Heart left ventricle (tissue), 16 donors: ENCODE measurements at regions of chrX and their contacts with region 1.

Region 1: GRCh38 chrX:101051549-101052302 is at the start of gene TRMT2B:
- DNase-seq: peak; percentile 69 to 84 (median 82)
- ATAC-seq: peak; percentile 95 to 99 (median 98)
- H3K4me3 ChIP-seq: peak within 1 kb of the TSS; percentile 12 to 92 (median 66)
- H3K27ac ChIP-seq: peak within 1 kb of the TSS; percentile 65 to 91 (median 85)
- H3K4me1 ChIP-seq: peaks cover 0 to 4% (median 0%) of the 10 kb centered on the region in 12 donors
- H3K27me3 ChIP-seq: no peaks in the 10 kb centered on the region
- CTCF ChIP-seq: no peak
- POLR2A ChIP-seq: peak in 1 of 2 donors; percentile 12
- total RNA-seq, gene TRMT2B: 13.5 to 21.6 (median 18.3) TPM

Region 2: DNA sequence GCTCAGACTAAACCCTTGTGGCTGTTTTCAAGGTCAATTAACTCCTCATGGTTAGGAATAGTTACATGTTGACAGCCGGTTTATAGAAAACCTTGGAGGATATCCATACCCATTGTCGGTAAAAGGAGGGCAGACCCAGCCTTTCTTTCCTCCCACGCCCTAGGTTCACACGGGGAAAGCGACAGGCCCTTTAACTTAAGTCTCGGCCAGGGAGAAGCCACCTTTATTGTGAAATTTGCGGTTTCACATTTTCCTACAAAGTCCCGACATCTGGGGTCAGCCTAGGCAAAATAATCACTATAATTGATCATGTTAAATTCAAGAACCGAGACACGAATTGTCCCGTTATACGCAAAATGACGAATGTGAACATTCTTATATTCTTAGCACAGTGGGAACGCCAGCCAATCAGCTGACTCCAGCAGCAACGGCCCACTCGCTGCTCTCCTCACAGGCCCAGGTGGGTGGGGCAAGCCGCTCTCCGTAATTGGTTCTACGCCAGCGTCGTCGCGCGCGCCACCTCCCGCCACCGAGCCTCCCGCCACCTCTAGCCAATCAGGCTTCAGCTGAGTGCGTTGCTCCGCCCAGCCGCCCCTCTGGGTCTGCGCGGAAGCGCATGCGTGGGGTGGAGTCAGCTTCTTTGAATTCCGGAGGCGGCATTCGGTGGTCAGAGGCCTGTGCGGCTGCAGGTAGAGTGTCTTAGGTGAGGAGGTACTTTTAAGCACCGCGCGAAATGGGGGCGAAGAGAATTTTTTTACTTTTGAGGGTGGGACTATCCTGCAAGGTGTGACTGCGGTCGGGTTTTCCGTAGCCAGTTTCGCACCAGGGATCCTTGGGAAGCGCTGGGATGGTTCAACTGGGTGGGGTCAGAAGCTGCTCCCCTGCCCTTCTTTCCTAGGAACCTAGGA is 46.1 kb after region 1 on chrX and contains the start of gene CENPI:
- intact Hi-C with region 1: loop called in 3 of 10 experiments (anchors 1 to 10 kb)
- DNase-seq: peak; percentile 92 to 96 (median 93)
- ATAC-seq: peak; percentile 100
- H3K4me3 ChIP-seq: peak within 1 kb of the TSS in 11 of 12 donors; percentile 19 to 68 (median 52)
- H3K27ac ChIP-seq: peak within 1 kb of the TSS in 11 of 12 donors; percentile 47 to 84 (median 75)
- H3K4me1 ChIP-seq: peaks cover 0 to 6% (median 0%) of the 10 kb centered on the region in 12 donors
- H3K27me3 ChIP-seq: peaks cover 0 to 3% (median 0%) of the 10 kb centered on the region in 9 donors
- CTCF ChIP-seq: no peak
- POLR2A ChIP-seq: peak in 1 of 2 donors; percentile 63
- total RNA-seq, gene CENPI: 0.20 to 3.3 (median 0.30) TPM

Region 3: GRCh38 chrX:101108284-101108683 is 56.6 kb after region 1 on chrX:
- intact Hi-C with region 1: loop called in 1 of 10 experiments (anchors 10 kb)
- DNase-seq: no peak
- ATAC-seq: no peak
- H3K4me3 ChIP-seq: no peak overlapping the region
- H3K27ac ChIP-seq: no peak overlapping the region
- H3K4me1 ChIP-seq: no peaks in the 10 kb centered on the region
- H3K27me3 ChIP-seq: peaks cover 0 to 2% (median 0%) of the 10 kb centered on the region in 9 donors
- CTCF ChIP-seq: no peak
- POLR2A ChIP-seq: no peak